ENCODE measurements at regions of chr15 and their contacts with region 1.

Region 1: GRCh38 chr15:62231856-62232255 is 66.8 kb upstream of the C2CD4B start:
- DNase-seq: no peak
- H3K4me3 ChIP-seq: no peak overlapping the region
- H3K27ac ChIP-seq: no peak overlapping the region
- H3K4me1 ChIP-seq: no peaks in the 10 kb centered on the region
- H3K27me3 ChIP-seq: no peaks in the 10 kb centered on the region
- CTCF ChIP-seq: no peak
- POLR2A ChIP-seq: no peak

Region 2: GRCh38 chr15:60551781-60552161 is 1680.1 kb before region 1 on chr15:
- intact Hi-C with region 1: loop called (anchors 5 kb)
- DNase-seq: no peak
- H3K4me3 ChIP-seq: no peak overlapping the region
- H3K27ac ChIP-seq: no peak overlapping the region
- H3K4me1 ChIP-seq: no peaks in the 10 kb centered on the region
- H3K27me3 ChIP-seq: no peaks in the 10 kb centered on the region
- CTCF ChIP-seq: no peak
- POLR2A ChIP-seq: no peak

Region 3: DNA sequence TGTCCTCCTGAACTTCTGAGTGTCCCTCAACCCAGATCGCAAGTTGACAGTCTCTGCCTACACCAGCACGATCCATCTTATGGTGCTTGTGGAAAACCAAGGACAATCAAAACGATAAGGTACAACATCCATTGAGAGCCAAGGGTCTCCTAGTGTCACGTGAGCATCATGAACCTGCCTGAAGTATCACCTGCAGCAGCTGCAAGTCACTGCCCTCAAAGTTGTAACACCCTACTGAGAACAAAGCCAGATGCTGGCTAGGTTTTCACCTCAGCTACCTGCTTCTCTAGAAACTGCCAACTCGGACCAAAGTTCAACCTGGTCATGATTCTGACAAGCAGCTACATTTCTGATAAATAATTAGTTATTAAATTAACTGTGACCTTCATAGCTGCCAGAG is 84.3 kb before region 1 on chr15:
- intact Hi-C with region 1: loop called (anchors 5 kb)
- DNase-seq: no peak
- H3K4me3 ChIP-seq: no peak overlapping the region
- H3K27ac ChIP-seq: no peak overlapping the region
- H3K4me1 ChIP-seq: no peaks in the 10 kb centered on the region
- H3K27me3 ChIP-seq: no peaks in the 10 kb centered on the region
- CTCF ChIP-seq: no peak
- POLR2A ChIP-seq: no peak

Region 4: DNA sequence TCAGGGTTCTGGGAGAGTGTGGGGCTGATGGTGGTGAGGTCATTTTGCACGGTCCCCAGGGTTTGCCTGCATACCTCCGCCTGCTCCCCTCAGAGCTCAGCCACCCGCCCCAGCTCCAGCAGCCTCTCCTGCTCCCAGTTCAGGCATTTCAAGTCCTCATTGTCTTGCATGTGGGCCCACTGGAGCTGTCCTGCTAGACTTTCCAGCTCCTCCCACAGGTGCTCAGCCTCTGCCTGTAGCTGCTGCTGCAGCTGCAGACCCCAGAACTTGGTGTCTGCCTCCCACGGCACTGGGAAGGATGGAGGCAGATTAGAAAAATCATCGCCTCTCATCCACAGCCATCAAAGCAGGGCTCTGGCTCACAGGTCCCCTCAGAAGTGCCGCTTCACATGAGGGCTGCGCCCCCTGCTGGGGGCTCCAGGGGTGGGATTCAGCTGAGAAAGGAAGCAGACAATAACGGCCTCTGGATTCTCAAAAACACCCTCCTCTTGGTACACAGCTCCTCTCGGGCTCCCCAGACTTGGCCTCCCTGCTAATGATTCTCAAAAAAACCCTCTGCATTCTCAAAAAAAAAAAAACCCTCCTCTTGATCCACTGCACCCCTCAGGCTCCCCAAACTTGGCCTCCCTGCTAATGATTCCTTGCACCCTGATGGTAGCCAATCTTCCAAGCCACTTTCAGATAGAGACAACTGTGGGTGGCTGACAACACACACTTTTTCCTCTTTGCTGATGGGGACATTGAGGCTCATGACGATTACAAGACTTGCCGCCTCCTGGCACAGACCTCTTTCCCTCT is 22.5 kb after region 1 on chr15:
- intact Hi-C with region 1: no loop called
- DNase-seq: no peak
- H3K4me3 ChIP-seq: no peak overlapping the region
- H3K27ac ChIP-seq: no peak overlapping the region
- H3K4me1 ChIP-seq: no peaks in the 10 kb centered on the region
- H3K27me3 ChIP-seq: no peaks in the 10 kb centered on the region
- CTCF ChIP-seq: peak in 1 of 3 donors; percentile 36
- POLR2A ChIP-seq: no peak